Mammary epithelial cell (primary cell): ENCODE measurements at regions of chr1 and their contacts with region 1.

Region 1: DNA sequence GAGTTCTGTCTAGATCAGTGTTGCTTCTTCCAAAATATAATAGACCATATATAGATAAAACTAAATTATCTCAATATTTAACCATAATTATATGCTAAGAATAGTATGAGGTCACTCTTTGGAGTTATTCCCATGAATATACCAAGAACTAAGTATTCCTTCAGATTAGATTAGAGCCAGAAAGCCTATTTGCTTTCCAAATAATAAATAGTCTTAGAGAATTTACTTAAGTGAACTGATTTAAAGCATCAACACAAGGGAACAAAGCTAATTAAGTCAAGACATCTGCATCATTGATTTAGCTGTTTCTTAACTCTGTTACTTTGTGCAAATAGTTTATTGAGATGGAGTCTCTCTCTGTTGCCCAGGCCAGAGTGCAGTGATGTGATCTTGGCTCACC is 35.7 kb downstream of the FNBP1L start:
- DNase-seq: no peak
- H3K4me3 ChIP-seq: no peak overlapping the region
- H3K27ac ChIP-seq: no peak overlapping the region
- H3K4me1 ChIP-seq: no peaks in the 10 kb centered on the region
- H3K27me3 ChIP-seq: no peaks in the 10 kb centered on the region
- CTCF ChIP-seq: no peak

Region 2: DNA sequence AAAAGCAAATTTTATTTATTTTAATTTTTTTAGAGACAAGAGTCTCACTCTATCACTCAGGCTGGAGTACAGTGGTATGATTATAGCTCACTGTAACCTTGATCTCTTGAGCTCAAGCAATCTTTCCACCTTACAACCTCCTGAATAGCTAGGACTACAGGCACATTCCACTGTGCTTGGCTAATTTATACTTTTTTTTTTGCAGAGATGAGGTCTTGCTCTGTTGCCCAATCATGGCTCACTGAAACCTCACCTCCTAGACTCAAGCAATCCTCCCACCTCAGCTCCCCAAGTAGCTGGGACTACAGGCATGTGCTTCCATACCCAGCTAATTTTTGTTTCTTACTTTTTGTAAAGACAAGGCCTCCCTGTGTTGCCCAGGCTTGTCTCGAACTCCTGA is 88.4 kb before region 1 on chr1:
- CTCF ChIA-PET with region 1: no interaction called
- dilution Hi-C with region 1: no loop called
- in situ Hi-C with region 1: no loop called
- intact Hi-C with region 1: no loop called
- DNase-seq: peak; percentile 3
- H3K4me3 ChIP-seq: no peak overlapping the region
- H3K27ac ChIP-seq: no peak overlapping the region
- H3K4me1 ChIP-seq: no peaks in the 10 kb centered on the region
- H3K27me3 ChIP-seq: no peaks in the 10 kb centered on the region
- CTCF ChIP-seq: no peak

Region 3: GRCh38 chr1:93426181-93426580 is 57.4 kb before region 1 on chr1:
- CTCF ChIA-PET with region 1: no interaction called
- dilution Hi-C with region 1: no loop called
- in situ Hi-C with region 1: no loop called
- intact Hi-C with region 1: no loop called
- DNase-seq: no peak
- H3K4me3 ChIP-seq: no peak overlapping the region
- H3K27ac ChIP-seq: no peak overlapping the region
- H3K4me1 ChIP-seq: no peaks in the 10 kb centered on the region
- H3K27me3 ChIP-seq: no peaks in the 10 kb centered on the region
- CTCF ChIP-seq: no peak

Region 4: DNA sequence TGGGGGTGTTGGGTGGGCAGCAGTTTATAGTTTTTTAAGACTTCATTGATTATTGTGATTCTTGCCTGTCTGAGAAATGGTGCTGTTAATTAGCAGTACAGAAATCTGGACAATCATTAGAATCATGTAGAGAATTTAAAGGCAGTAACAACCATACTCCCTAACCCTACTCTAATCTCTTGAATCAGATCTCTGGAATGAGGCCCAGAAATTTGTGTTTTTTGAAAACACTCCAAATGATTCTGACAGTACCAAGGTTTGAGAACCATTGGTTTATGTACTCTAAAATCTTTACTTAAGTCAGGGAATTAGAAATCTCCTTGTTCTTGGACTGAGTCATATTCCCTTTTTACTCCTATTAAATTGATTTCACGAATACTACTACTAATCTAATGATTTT is 11.7 kb before region 1 on chr1:
- CTCF ChIA-PET with region 1: no interaction called
- dilution Hi-C with region 1: no loop called
- in situ Hi-C with region 1: no loop called
- intact Hi-C with region 1: loop called (anchors 2 kb)
- DNase-seq: peak; percentile 58
- H3K4me3 ChIP-seq: no peak overlapping the region
- H3K27ac ChIP-seq: no peak overlapping the region
- H3K4me1 ChIP-seq: peaks cover 7% of the 10 kb centered on the region
- H3K27me3 ChIP-seq: no peaks in the 10 kb centered on the region
- CTCF ChIP-seq: no peak